AG04449 (cell line): ENCODE measurements at regions of chr20 and their contacts with region 1.

Region 1: DNA sequence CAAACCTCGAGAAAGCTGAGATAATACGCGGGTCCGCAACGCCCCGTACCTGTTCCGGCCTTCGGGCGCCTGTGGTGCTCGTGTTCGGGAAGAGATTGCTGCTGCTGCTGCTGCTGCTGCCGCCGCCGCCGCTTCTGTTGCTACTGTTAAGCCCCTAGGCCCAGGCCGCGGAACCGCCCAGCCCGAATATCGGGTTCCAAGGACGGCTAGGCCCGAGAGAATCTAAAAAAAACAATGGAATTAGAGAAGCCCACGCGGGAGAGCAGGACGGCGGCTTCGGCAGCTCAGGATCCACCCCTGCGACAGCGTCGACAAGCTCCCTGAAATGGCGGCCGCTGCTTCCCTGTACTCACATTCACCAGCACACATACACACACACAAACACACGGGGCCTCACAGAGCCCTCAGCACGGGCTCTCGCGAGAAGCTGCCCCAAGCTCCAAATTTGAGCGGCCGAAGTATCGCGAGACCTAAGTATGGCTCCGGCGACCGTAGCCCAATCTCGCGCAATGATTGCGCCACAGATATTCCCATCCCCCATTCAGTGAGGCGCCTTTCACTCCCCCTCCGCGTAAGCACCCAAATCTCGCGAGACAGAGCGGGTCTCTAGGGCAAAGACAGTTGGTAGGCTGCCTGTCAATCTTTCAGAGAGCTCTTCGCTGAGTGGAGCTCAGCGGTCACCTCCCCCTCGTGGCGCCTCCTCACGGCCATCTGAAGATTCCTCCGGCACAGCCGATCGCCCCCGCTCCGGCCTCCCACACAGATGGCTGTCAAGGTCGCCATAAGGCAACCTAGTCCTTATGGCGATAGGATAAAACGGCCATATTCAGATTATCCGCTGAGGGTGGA is at the start of gene RBM39:
- DNase-seq: peak; percentile 99
- H3K4me3 ChIP-seq: peak within 1 kb of the TSS; percentile 80
- CTCF ChIP-seq: peak; percentile 73

Region 2: DNA sequence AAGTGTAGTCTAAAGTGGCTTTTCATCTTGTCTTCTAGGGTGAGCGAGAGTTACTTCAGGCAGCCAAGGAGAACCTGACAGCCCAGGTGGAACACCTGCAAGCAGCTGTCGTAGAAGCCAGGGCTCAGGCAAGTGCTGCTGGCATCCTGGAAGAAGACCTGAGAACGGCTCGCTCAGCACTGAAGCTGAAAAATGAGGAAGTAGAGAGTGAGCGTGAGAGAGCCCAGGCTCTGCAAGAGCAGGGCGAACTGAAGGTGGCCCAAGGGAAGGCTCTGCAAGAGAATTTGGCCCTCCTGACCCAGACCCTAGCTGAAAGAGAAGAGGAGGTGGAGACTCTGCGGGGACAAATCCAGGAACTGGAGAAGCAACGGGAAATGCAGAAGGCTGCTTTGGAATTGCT is 239.8 kb before region 1 on chr20:
- CTCF ChIA-PET with region 1: no interaction called
- POLR2A ChIA-PET with region 1: no interaction called
- DNase-seq: no peak
- H3K4me3 ChIP-seq: no peak overlapping the region
- CTCF ChIP-seq: no peak

Region 3: GRCh38 chr20:35619196-35620095 is 122.7 kb before region 1 on chr20:
- CTCF ChIA-PET with region 1: no interaction called
- POLR2A ChIA-PET with region 1: interaction called, 10 read pairs
- DNase-seq: peak; percentile 10
- H3K4me3 ChIP-seq: peak overlapping the region; percentile 70
- CTCF ChIP-seq: peak; percentile 62

Region 4: DNA sequence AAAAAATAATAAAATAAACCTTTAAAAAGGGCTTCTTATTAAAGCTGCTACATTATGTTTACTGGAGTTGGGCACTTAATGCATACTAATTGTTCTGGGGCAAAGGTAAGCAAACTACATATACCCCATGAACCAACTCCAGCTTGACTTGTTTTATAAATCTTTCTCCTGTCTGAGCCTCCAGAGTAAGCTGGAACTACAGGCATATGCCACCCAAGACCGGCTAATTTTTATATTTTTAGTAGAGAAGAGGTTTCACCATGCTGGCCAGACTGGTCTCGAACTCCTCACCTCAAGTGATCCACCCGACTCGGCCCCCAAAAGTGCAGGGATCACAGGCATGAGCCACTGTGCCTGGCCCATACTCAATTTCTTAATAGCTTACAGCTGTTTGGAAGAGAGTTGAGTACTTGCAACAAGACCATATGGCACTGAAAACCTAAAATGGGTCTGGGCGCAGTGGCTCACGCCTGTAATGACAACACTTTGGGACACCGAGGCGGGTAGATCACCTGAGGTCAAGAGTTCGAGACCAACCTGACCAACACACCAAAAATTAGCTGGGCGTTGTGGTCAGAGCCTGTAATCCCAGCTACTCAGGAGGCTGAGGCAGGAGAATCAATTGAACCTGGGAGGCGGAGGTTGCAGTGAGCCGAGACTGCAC is 23.0 kb before region 1 on chr20:
- CTCF ChIA-PET with region 1: interaction called, 13 read pairs
- POLR2A ChIA-PET with region 1: interaction called, 4 read pairs
- DNase-seq: no peak
- H3K4me3 ChIP-seq: no peak overlapping the region
- CTCF ChIP-seq: no peak

Region 5: DNA sequence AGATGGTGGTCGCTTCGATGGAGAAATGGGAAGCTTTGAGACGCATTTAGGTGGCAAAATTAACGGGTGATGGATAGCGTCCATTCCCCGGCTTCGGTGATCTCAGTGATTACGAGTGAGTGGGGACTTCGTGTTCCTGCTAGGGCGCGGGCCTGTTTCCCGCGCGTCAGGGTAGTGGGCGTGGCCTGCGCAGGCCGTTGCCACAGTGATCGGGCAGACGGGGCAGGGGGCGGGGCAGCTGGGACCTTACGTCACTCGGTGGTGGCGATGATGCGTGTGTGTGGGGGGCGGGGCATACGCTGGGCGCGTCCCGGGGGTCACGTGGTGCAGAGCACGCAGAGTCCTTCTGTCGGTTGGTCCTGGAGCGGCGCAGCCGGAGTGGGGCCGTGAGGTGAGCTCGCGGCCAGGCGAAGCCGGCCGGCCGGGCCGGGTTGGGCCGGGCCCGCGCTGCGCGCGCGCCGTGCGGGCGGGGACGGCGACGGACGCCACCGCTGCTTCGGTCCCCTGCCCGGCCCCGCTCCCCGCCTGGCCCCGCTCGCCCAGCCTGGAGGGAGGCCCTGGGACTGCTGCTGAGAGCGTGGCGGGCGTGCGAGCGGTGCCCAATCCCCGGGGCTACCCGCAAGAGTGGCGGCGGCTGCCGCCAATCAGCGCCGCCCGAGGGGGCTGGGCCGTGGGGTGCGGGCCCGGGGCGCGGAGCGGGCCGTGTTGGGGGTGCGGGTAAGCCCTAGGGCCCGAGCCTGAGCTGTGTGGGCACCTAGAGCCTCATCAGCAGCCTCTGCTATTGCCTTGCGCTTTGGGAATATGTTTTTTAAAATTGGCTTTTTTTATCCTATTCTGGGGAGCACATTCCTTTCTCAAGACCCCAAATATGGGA is 29.8 kb after region 1 on chr20 and contains the start of gene PHF20:
- CTCF ChIA-PET with region 1: interaction called, 5 read pairs
- POLR2A ChIA-PET with region 1: interaction called, 26 read pairs
- DNase-seq: peak; percentile 80
- H3K4me3 ChIP-seq: peak within 1 kb of the TSS; percentile 83
- CTCF ChIP-seq: no peak

Region 6: DNA sequence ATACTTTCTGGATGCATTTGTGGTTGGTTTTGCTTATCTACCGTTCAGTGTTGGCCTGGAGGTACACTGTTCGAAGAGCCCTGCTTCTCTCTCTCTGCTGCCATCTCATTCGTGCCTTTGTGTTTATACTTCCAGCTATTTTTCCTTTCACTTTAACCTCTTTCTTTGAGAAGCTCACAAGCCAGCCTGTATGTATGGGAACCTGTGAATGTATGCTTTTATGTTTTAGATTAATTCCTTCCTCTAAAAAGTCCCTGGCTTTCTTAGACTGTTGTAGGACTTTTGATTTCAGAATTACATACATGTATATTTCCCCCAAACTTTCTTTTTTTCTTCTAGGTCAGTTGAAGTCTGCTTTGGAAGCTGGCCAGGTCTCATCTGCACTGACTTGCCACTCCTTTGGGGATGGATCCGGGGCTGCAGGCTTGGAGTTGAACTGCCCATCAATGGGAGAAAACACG is 129.2 kb after region 1 on chr20:
- CTCF ChIA-PET with region 1: no interaction called
- POLR2A ChIA-PET with region 1: interaction called, 14 read pairs
- DNase-seq: no peak
- H3K4me3 ChIP-seq: no peak overlapping the region
- CTCF ChIP-seq: no peak

Region 7: DNA sequence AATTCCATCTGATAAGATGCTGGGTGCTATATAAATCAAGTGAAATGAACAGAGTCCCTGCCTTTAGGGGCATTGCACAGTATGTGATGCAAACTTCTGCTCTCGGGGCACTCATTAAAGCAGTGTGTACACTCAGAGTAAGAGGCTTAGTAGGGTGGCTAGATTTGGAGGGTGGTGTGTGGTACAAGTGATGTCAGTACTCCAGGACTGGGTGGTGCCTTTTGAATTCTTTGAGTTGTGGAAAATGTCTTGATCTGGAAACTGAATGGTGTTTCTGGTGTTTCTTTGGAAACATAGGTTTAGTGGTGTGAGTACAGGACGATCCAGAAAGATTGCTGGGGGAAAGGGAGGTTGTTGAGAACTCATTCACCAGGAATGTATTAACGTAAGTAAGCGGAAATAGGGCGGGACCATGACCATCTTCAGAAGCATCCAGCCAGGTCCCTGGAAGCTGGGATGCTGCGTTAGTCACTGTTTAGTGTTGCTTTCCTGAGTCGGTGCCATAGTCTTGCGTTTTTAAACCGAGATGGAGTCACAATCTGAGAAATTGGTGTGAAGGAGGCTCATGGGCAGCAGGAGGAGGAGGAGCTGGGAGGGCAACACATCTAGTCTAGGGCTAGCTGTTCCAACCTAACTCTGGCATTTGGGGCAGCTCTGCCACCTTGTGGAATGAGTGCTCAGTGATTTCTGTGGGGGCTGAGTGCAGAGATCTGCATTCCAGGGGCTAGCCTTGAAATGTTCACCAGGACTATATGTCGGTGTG is 141.8 kb after region 1 on chr20:
- CTCF ChIA-PET with region 1: interaction called, 19 read pairs
- POLR2A ChIA-PET with region 1: interaction called, 51 read pairs
- DNase-seq: peak; percentile 99
- H3K4me3 ChIP-seq: peak overlapping the region; percentile 38
- CTCF ChIP-seq: peak; percentile 67